Panc1 (cell line): ENCODE measurements at regions of chr15 and their contacts with region 1.

Region 1: DNA sequence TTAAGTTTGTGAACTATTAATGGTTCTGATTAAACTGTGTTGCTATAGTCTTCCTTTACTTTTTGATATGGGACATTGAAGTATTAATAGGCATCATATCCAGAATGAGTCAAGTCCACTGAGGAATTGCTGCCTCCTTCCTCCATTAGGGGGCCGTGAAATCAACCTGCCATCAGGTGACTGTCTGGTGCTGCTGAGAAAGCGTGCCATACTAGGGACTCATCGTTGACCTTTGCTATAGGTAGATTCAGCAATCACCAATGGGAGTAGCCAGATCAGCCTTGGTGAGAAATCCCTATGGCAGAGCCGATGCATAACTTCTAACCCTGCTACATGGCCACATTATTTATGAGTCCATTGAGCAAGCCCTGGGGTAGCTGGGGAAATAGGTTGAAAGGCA is 30.1 kb upstream of the SLC28A2 start:
- DNase-seq: no peak
- ATAC-seq: no peak
- H3K4me3 ChIP-seq: no peak overlapping the region
- H3K27ac ChIP-seq: no peak overlapping the region
- H3K4me1 ChIP-seq: peaks cover 4% of the 10 kb centered on the region
- H3K27me3 ChIP-seq: no peaks in the 10 kb centered on the region
- CTCF ChIP-seq: no peak

Region 2: DNA sequence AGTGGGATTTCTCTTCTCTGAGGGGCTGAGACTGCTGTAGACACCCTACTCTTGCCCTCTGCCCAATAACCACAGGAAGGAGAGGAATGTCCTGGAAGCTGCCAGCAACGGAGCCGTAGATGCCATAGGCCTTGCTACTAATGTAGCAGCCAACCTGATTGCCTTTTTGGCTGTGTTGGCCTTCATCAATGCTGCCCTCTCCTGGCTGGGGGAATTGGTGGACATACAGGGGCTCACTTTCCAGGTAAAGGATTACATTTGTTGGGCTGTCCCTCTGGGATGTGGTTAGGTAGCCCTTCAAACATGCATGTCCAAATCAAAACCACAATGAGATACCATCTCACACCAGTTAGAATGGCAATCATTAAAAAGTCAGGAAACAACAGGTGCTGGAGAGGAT is 46.2 kb after region 1 on chr15:
- CTCF ChIA-PET with region 1: no interaction called
- POLR2A ChIA-PET with region 1: no interaction called
- in situ Hi-C with region 1: no loop called
- intact Hi-C with region 1: no loop called
- DNase-seq: no peak
- ATAC-seq: no peak; the same call in 1 of the 2 replicates
- H3K4me3 ChIP-seq: no peak overlapping the region
- H3K27ac ChIP-seq: no peak overlapping the region
- H3K4me1 ChIP-seq: no peaks in the 10 kb centered on the region
- H3K27me3 ChIP-seq: no peaks in the 10 kb centered on the region
- CTCF ChIP-seq: peak; percentile 61

Region 3: DNA sequence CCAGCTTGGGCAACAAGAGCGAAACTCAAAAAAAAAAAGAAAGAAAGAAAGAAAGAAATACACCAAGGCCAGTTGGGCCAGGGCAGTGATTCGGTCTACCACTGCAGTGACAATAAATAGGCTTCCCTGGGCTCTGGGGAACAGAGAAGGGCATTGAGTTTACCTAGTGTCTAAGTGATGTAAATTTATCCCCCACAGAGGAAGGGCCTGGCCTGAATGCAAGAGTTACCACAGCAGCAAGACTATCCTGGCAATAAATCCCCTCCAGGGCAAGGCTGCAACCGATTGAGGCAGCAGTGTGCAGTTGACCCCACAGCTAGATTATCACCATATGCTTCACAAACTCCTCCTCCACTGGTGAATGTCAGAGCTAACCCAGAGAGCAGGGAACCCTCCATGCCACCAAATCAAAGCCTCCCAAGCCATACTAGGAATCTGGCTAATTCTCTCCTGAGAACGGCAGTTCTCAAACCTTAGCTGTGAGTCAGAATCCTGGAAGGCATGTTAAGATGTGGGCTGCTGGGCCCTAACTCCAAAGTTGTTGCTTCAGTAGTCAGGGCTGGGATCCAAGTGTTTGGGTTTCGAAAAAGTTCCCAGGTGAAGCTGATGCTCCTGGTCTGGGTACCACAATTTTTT is 220.7 kb after region 1 on chr15:
- CTCF ChIA-PET with region 1: no interaction called
- POLR2A ChIA-PET with region 1: interaction called, 13 read pairs
- in situ Hi-C with region 1: no loop called
- intact Hi-C with region 1: no loop called
- DNase-seq: no peak
- ATAC-seq: no peak
- H3K4me3 ChIP-seq: no peak overlapping the region
- H3K27ac ChIP-seq: 0 out of 2 replicates have a peak overlapping the region, but pooled peaks have one; percentile 15
- H3K4me1 ChIP-seq: peaks cover 17% of the 10 kb centered on the region
- H3K27me3 ChIP-seq: no peaks in the 10 kb centered on the region
- CTCF ChIP-seq: no peak